ENCODE measurements at regions of chr3 and their contacts with region 1.

Region 1: DNA sequence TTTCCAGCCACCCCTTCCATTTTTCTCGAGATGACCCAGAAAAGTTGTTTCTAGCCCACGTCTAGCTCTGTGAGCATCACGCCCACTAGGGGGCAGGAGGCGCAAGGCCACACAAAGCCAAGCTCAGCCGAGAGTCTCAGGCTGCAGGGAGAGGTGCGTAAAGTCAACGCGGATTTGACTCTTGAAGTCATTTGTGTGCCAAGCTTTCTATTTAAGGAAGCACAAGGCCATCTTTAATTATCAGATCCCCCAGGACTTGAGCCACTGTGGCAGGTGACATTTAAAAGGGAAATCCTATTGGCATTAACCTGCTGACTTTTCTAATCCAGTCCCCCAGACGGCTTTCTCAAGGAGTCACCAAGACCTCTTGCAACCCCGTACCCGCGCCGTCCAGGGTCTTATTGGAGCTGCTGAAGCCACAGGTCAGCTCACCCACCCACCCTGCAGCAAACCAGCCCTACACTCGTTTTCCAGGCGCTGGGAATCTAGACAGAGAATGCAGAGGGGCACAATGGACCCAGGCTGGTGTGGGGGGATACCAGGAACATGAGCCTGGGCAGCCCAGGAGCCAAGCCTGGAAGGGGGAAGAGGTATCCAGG is 62.1 kb downstream of the CAPN7 start:
- DNase-seq: peak; percentile 87
- ATAC-seq: peak; percentile 41
- H3K4me3 ChIP-seq: no peak overlapping the region
- H3K4me3 Mint-ChIP-seq: peak overlapping the region; percentile 39
- H3K27ac ChIP-seq: no peak overlapping the region
- H3K27ac Mint-ChIP-seq: no peak overlapping the region
- H3K4me1 ChIP-seq: peaks cover 71 to 79% of the 10 kb centered on the region in 2 donors
- H3K4me1 Mint-ChIP-seq: peaks cover 81% of the 10 kb centered on the region
- H3K27me3 ChIP-seq: no peaks in the 10 kb centered on the region
- H3K27me3 Mint-ChIP-seq: no peaks in the 10 kb centered on the region
- CTCF ChIP-seq: peak; percentile 92

Region 2: GRCh38 chr3:14137004-14137403 is 1131.1 kb before region 1 on chr3:
- CTCF ChIA-PET with region 1: no interaction called
- POLR2A ChIA-PET with region 1: no interaction called
- intact Hi-C with region 1: no loop called
- DNase-seq: no peak
- ATAC-seq: no peak
- H3K4me3 ChIP-seq: no peak overlapping the region
- H3K4me3 Mint-ChIP-seq: no peak overlapping the region
- H3K27ac ChIP-seq: no peak overlapping the region
- H3K27ac Mint-ChIP-seq: no peak overlapping the region
- H3K4me1 ChIP-seq: no peaks in the 10 kb centered on the region
- H3K4me1 Mint-ChIP-seq: no peaks in the 10 kb centered on the region
- H3K27me3 ChIP-seq: no peaks in the 10 kb centered on the region
- H3K27me3 Mint-ChIP-seq: no peaks in the 10 kb centered on the region
- CTCF ChIP-seq: no peak

Region 3: DNA sequence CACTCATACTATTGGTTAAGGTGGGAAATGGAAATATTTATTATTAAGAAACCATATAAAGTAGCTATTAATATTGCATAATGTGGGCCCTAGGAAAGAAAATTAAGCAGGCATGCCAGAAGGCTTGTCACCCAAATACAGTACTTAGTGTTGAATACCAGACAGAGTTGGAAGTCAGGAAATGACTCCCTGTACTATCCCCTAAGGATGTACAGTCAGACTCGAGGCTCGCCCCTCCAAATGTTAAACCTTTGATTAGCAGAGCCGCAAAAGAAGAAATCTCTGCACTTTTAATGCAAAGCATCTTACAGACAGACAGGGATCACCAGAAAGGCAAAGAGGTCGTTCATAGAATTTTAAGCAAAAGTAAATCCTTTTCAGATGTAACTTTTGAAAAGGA is 157.9 kb before region 1 on chr3:
- CTCF ChIA-PET with region 1: no interaction called
- POLR2A ChIA-PET with region 1: no interaction called
- intact Hi-C with region 1: no loop called
- DNase-seq: no peak
- ATAC-seq: no peak
- H3K4me3 ChIP-seq: no peak overlapping the region
- H3K4me3 Mint-ChIP-seq: no peak overlapping the region
- H3K27ac ChIP-seq: no peak overlapping the region
- H3K27ac Mint-ChIP-seq: no peak overlapping the region
- H3K4me1 ChIP-seq: peaks cover 3 to 6% of the 10 kb centered on the region in 2 donors
- H3K4me1 Mint-ChIP-seq: peaks cover 6% of the 10 kb centered on the region
- H3K27me3 ChIP-seq: peaks cover 0 to 9% (median 0%) of the 10 kb centered on the region in 4 experiments
- H3K27me3 Mint-ChIP-seq: peaks cover 4% of the 10 kb centered on the region
- CTCF ChIP-seq: no peak

Region 4: DNA sequence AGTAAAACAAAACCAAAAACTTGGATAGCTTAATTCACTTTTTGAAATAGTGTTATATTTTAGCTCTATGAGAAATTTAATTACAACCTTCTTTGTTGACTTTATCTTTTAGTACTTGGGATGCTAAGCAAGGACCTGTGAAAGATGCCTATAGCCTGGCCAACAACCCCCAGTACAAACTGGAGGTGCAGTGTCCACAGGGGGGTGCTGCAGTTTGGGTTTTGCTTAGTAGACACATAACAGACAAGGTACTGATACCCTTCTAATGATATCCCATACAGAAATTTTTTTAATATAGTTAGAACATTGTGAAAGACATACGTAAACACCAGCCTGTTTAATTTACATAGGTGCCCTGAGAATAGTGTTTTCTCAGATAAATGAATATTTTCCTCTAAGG is 26.8 kb before region 1 on chr3:
- CTCF ChIA-PET with region 1: interaction called, 10 read pairs
- POLR2A ChIA-PET with region 1: no interaction called
- intact Hi-C with region 1: no loop called
- DNase-seq: peak; percentile 60
- ATAC-seq: peak; percentile 61
- H3K4me3 ChIP-seq: no peak overlapping the region
- H3K4me3 Mint-ChIP-seq: no peak overlapping the region
- H3K27ac ChIP-seq: no peak overlapping the region
- H3K27ac Mint-ChIP-seq: no peak overlapping the region
- H3K4me1 ChIP-seq: no peaks in the 10 kb centered on the region
- H3K4me1 Mint-ChIP-seq: no peaks in the 10 kb centered on the region
- H3K27me3 ChIP-seq: no peaks in the 10 kb centered on the region
- H3K27me3 Mint-ChIP-seq: no peaks in the 10 kb centered on the region
- CTCF ChIP-seq: peak; percentile 64

Region 5: DNA sequence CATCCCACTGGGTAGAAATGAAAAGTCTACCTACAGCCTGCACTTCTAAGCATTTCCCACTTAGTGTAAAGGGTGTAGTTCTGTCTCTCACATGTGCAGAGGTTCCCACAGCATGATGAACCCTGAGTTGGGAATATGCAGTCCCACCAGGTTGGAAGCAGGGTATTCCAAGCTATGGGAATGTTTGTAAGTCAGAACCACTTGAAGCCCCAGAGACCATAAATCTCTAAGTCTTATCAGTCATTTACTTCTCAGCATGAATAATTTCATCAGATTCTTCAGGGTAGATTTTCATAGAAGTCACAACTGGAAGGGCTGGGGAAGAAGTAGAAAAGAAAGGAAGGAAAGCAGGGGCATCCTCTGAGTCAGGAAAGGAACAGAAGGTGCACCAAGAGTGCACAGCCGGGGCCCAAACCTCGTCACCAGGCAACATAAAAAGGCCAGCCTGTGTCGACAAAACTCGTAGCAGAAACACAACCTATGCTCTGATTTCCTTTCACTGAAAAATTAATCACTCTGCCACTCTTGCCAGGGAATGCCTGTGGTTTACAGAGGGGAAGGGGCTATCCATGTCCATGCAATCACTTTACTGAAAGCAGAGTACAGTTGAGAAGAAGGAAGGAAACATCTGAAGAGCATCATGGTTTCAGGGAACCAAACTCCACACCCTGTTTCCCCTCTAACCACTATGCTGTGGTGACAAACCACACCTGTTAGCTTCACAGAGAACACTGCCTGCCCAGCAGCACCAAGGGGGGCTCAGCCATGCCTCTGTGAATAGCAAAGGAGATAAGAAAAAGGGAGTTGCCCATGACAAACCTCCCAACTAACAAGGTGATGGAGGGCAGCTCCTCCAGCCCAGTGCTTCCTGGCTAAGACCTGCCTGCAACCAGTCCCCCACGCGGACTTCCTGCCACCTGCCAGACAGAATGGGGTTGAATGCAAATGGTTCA is 23.7 kb after region 1 on chr3:
- CTCF ChIA-PET with region 1: interaction called, 29 read pairs
- POLR2A ChIA-PET with region 1: interaction called, 4 read pairs
- intact Hi-C with region 1: loop called (anchors 1 kb)
- DNase-seq: peak; percentile 87
- ATAC-seq: peak; percentile 80
- H3K4me3 ChIP-seq: peak overlapping the region in 3 of 5 experiments; percentile 5 to 30 (median 27)
- H3K4me3 Mint-ChIP-seq: peak overlapping the region; percentile 83
- H3K27ac ChIP-seq: peak overlapping the region; percentile 58 to 87
- H3K27ac Mint-ChIP-seq: peak overlapping the region; percentile 97
- H3K4me1 ChIP-seq: peaks cover 96 to 99% of the 10 kb centered on the region in 2 donors
- H3K4me1 Mint-ChIP-seq: peaks cover 89% of the 10 kb centered on the region
- H3K27me3 ChIP-seq: no peaks in the 10 kb centered on the region
- H3K27me3 Mint-ChIP-seq: no peaks in the 10 kb centered on the region
- CTCF ChIP-seq: no peak

Region 6: DNA sequence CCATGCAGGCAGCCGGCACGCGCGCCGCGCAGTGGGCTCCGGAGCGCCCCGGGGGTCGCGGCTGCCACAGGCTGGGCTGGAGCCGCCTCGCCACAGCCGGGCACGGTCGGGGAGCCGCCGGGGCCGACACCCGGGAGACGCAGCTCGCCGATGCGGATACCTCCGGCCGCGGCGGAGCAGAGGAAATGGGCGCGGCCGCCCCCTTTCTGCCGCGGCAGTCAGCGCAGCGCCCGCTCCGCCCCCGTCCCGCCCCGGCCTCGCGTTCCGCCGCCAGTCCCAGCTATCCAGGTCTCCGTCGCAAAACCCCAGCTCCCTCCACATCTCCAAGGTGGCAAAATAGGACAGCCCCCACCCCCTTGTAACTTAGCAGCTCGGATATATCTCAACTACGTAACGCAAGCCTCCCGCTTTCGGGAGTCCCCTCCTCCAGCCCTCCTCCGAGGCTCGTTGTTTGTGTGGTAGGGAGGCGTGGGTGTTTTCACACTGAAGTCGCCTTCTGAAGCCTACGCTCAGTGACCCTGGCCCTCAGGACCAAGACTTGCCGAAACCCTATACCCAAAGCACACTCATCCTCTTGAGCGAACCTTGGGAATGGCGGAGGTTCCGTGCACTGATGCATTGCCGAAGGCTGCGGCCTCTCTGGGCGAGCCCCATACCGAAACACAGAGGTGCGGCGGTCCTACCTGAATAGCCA is 64.4 kb after region 1 on chr3 and contains the start of gene SH3BP5:
- CTCF ChIA-PET with region 1: interaction called, 221 read pairs
- POLR2A ChIA-PET with region 1: interaction called, 5 read pairs
- intact Hi-C with region 1: loop called (anchors 1 kb)
- DNase-seq: peak; percentile 86
- ATAC-seq: peak; percentile 85
- H3K4me3 ChIP-seq: peak within 1 kb of the TSS; percentile 75 to 98 (median 92)
- H3K4me3 Mint-ChIP-seq: peak within 1 kb of the TSS; percentile 93
- H3K27ac ChIP-seq: peak within 1 kb of the TSS; percentile 76 to 84
- H3K27ac Mint-ChIP-seq: peak within 1 kb of the TSS; percentile 94
- H3K4me1 ChIP-seq: peaks cover 49% of the 10 kb centered on the region in 2 donors
- H3K4me1 Mint-ChIP-seq: peaks cover 58% of the 10 kb centered on the region
- H3K27me3 ChIP-seq: no peaks in the 10 kb centered on the region
- H3K27me3 Mint-ChIP-seq: no peaks in the 10 kb centered on the region
- CTCF ChIP-seq: peak; percentile 75
- total RNA-seq, gene SH3BP5: 73.6 and 76.6 TPM in 2 replicates

Region 7: GRCh38 chr3:15361494-15362212 is 93.5 kb after region 1 on chr3:
- CTCF ChIA-PET with region 1: interaction called, 36 read pairs
- POLR2A ChIA-PET with region 1: interaction called, 3 read pairs
- intact Hi-C with region 1: no loop called
- DNase-seq: peak; percentile 64
- ATAC-seq: peak; percentile 66
- H3K4me3 ChIP-seq: peak overlapping the region; percentile 5 to 54 (median 19)
- H3K4me3 Mint-ChIP-seq: peak overlapping the region; percentile 76
- H3K27ac ChIP-seq: peak overlapping the region; percentile 95 to 96
- H3K27ac Mint-ChIP-seq: peak overlapping the region; percentile 80
- H3K4me1 ChIP-seq: peaks cover 48 to 63% of the 10 kb centered on the region in 2 donors
- H3K4me1 Mint-ChIP-seq: peaks cover 59% of the 10 kb centered on the region
- H3K27me3 ChIP-seq: no peaks in the 10 kb centered on the region
- H3K27me3 Mint-ChIP-seq: no peaks in the 10 kb centered on the region
- CTCF ChIP-seq: no peak

Region 8: GRCh38 chr3:15384510-15385237 is 116.5 kb after region 1 on chr3:
- CTCF ChIA-PET with region 1: interaction called, 137 read pairs
- POLR2A ChIA-PET with region 1: interaction called, 3 read pairs
- intact Hi-C with region 1: no loop called
- DNase-seq: peak; percentile 70
- ATAC-seq: peak; percentile 89
- H3K4me3 ChIP-seq: peak overlapping the region in 3 of 5 experiments; percentile 18 to 32 (median 27)
- H3K4me3 Mint-ChIP-seq: peak overlapping the region; percentile 57
- H3K27ac ChIP-seq: peak overlapping the region; percentile 83 to 85
- H3K27ac Mint-ChIP-seq: peak overlapping the region; percentile 77
- H3K4me1 ChIP-seq: peaks cover 73 to 88% of the 10 kb centered on the region in 2 donors
- H3K4me1 Mint-ChIP-seq: peaks cover 75% of the 10 kb centered on the region
- H3K27me3 ChIP-seq: no peaks in the 10 kb centered on the region
- H3K27me3 Mint-ChIP-seq: no peaks in the 10 kb centered on the region
- CTCF ChIP-seq: no peak

Region 9: DNA sequence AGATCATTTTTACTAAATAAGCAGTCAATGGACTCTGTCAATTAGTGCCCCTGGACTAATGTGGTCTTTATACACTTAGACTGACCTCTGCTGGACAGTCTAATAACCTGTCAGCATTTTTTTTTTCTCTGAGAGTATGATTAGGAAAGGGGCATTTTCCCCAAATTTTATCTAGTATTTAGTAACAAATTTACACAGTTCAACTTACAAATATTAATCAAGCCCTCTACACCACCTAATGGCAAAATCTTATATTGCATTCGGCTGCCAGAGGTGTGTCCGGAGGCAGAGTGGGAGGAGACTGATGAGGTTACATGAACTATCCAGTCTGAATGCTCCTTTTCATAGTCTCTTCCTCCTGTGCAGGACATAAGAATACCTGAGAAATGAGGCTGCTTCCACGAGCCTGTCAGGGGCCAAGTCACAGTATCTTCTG is 289.4 kb after region 1 on chr3:
- CTCF ChIA-PET with region 1: interaction called, 14 read pairs
- POLR2A ChIA-PET with region 1: no interaction called
- intact Hi-C with region 1: loop called (anchors 1 kb)
- DNase-seq: peak; percentile 82
- ATAC-seq: peak; percentile 73
- H3K4me3 ChIP-seq: no peak overlapping the region
- H3K4me3 Mint-ChIP-seq: no peak overlapping the region
- H3K27ac ChIP-seq: peak overlapping the region in 1 of 2 donors; percentile 78
- H3K27ac Mint-ChIP-seq: no peak overlapping the region
- H3K4me1 ChIP-seq: peaks cover 23 to 30% of the 10 kb centered on the region in 2 donors
- H3K4me1 Mint-ChIP-seq: peaks cover 29% of the 10 kb centered on the region
- H3K27me3 ChIP-seq: no peaks in the 10 kb centered on the region
- H3K27me3 Mint-ChIP-seq: no peaks in the 10 kb centered on the region
- CTCF ChIP-seq: peak; percentile 80

Region 10: GRCh38 chr3:15708882-15709677 is 440.9 kb after region 1 on chr3:
- CTCF ChIA-PET with region 1: no interaction called
- POLR2A ChIA-PET with region 1: no interaction called
- intact Hi-C with region 1: no loop called
- DNase-seq: no peak
- ATAC-seq: no peak
- H3K4me3 ChIP-seq: no peak overlapping the region
- H3K4me3 Mint-ChIP-seq: no peak overlapping the region
- H3K27ac ChIP-seq: no peak overlapping the region
- H3K27ac Mint-ChIP-seq: no peak overlapping the region
- H3K4me1 ChIP-seq: no peaks in the 10 kb centered on the region
- H3K4me1 Mint-ChIP-seq: no peaks in the 10 kb centered on the region
- H3K27me3 ChIP-seq: no peaks in the 10 kb centered on the region
- H3K27me3 Mint-ChIP-seq: no peaks in the 10 kb centered on the region
- CTCF ChIP-seq: no peak

Measured in B cell (primary cell).